ENCODE measurements at regions of chr1 and their contacts with region 1.

Region 1: DNA sequence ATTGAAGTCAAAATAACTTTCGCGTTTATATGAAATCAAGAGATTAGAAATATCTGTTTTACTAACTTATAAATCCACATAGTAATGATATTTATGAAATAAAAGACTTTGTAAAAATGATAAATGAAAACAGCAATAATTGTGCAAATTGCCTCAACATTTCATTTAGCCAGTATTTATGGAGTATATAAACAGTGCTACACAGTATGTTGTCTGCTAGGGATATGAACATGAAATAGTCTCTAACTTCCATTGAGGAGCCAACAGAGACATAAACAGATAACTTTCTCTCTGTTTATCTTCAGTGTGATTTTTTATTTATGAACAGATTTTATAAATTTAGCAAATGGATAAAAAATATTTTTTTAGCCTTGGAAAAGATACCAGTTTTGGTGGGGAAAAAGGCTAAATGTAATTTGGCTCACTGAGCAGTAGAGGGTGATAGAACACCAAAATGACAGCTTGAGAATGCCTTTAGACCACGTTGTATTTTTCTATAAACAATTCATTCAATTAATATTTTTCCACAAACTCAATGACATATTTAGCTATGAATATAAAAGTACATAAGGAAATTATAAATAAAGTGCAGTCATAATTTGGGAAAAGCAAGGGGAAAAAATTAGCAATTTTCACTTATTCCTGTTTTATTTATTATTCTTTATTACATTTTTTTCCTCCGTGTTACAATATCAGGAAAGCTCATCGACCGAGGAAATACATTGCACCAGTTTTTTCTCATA is 47.5 kb upstream of the EEIG2 start:
- DNase-seq: no peak
- ATAC-seq: peak in 1 of 2 donors; percentile 54

Region 2: GRCh38 chr1:108643492-108644335 is 131.3 kb after region 1 on chr1:
- intact Hi-C with region 1: loop called (anchors 1 to 2 kb)
- DNase-seq: peak; percentile 41
- ATAC-seq: peak; percentile 64 to 67

Region 3: GRCh38 chr1:108686614-108687313 is 174.4 kb after region 1 on chr1:
- intact Hi-C with region 1: no loop called
- DNase-seq: no peak
- ATAC-seq: no peak